AG04449 (cell line): ENCODE measurements at regions of chr19 and their contacts with region 1.

Region 1: DNA sequence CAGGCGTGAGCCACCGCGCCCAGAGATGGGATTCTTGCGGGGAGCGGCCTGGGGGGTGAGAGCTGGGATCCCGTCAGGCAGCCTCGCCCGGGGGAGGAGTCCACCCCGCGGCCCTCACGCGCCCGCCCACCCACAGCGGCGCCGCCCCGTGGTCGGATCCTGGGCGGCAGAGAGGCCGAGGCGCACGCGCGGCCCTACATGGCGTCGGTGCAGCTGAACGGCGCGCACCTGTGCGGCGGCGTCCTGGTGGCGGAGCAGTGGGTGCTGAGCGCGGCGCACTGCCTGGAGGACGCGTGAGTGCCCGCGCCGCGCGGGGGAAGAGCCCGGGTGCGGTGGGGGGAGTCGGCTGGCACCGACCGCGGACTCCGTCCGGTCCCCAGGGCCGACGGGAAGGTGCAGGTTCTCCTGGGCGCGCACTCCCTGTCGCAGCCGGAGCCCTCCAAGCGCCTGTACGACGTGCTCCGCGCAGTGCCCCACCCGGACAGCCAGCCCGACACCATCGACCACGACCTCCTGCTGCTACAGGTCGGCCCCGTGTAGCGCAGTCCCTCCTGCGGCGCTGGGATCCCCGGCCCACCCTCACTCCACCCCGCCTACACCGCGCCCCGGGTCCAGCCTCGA is 1.1 kb downstream of the CFD start:
- DNase-seq: no peak
- H3K4me3 ChIP-seq: peak overlapping the region; percentile 47
- CTCF ChIP-seq: peak; percentile 37

Region 2: DNA sequence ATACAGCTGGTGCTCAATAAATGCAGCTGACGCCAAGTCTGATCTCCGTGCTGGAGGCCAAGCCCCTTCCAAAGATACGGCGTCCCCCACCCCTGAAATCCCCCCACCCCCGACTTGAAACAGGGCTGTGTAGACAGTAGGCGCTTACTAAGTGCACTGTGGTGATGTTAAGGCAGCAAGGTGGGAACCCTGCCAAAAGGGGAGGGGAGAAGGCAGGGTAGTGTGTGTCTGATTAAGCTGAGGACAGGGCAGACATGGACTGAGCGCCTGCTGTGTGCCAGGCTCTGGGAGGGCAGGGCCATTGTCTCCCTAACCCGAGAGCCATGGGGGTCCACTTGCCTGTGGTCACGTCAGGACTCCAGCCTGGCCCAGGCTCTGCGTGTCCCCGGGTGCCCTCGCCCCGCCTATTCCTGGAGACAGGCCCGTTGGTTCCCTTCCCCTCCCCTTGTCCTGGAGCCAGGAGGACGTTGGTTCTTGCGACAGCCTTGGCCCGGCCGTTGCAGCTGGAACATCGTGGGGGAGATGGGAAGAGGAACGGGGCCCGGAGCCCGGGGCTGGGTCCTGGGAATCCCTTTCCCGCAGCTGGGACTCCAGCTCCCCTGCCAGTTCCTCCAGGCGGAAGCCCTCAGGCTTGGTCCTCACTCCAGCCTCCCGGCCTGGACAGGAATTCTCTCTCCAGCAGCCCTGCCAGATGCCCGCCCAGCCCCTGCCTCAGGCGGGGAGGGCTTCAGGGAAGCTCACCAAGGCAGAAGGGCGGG is 10.2 kb before region 1 on chr19:
- CTCF ChIA-PET with region 1: interaction called, 27 read pairs
- POLR2A ChIA-PET with region 1: no interaction called
- DNase-seq: peak; percentile 47
- H3K4me3 ChIP-seq: no peak overlapping the region; the same call in 1 of the 2 replicates
- CTCF ChIP-seq: no peak